Testis (tissue), 5 donors: ENCODE measurements at regions of chr14 and their contacts with region 1.

Region 1: GRCh38 chr14:22472935-22473854 is 115.8 kb downstream of the DAD1 start:
- DNase-seq: peak; percentile 58
- H3K4me3 ChIP-seq: no peak overlapping the region
- H3K27ac ChIP-seq: no peak overlapping the region
- H3K4me1 ChIP-seq: peaks cover 18% of the 10 kb centered on the region
- H3K27me3 ChIP-seq: no peaks in the 10 kb centered on the region
- CTCF ChIP-seq: peak in 2 of 3 experiments; percentile 37 to 38
- POLR2A ChIP-seq: no peak

Region 2: DNA sequence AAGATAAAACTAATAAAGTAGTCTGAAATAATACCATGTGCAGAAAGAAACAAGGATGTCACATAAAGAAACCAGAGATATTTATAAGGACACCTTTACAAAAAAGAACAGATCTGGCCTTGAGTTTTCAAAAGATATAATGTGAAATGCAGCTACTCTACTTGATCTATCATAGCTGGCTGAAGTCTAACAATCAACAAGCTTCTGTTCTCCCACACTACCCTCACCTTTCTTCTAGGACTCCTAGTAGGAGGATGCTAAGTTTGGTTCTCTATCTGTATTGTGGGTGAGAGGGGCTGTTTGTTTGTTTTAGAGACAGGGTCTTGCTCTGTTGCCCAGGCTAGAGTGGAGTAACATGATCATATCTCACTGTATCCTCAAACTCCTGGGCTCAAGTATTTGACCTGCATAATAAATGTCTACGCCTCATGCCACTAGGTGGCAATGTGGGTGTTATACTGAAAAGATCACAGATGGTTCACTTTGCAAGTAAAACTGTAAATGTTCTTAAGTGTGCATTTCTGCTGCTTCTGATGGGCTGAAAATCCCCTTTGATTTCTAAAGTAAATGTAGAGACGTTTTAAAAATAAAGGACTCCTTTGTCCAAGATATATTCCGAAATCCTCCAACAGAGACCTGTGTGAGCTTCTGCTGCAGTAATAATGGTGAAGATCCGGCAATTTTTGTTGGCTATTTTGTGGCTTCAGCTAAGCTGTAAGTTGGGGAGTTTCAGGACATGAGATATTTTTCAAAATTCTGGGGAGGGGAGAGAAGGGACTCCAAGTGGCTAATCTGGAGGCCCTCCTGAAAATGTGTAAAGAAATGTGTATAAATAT is 153.5 kb before region 1 on chr14:
- intact Hi-C with region 1: no loop called
- DNase-seq: peak; percentile 76
- H3K4me3 ChIP-seq: no peak overlapping the region
- H3K27ac ChIP-seq: no peak overlapping the region
- H3K4me1 ChIP-seq: no peaks in the 10 kb centered on the region
- H3K27me3 ChIP-seq: no peaks in the 10 kb centered on the region
- CTCF ChIP-seq: peak; percentile 46 to 75 (median 68)
- POLR2A ChIP-seq: no peak

Region 3: DNA sequence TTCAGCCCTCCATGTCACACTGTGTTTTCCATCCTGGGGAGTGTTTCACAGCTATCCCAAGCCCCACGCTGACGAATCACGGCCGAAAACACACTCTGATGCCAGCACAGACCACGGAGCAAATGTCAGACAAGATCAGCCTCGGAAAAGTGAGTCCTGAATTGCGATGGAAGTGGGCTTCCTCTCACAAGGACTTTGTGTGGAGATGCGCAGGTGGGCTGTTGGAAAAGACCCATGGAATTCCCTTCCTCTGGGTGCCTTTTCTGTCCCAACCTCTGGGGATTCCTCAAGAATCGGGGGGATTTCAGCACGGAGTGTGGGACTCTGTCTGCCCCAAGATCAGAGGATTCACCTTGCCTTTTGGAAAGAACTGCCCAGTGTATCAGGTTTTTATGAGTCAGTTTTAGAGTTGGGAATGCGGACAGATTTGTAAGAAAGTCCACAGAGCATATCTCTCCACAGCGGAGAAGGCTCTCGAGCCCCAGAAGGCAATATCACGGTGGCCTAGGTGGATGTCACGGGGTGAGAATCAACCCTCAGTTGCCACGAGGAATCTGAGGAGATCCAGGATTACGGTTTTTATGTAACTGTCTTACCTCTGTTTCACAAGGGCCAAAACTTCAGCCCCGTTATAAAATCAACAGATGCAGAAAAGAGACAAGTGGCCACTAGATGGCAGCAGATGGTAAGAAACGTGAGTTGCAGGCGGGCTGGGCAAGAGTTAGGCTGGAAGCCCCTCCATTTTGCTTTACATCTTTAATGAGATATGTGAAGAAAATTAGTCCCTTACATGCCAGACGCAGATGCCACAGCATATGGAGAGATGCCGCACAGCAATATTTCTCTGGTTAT is 86.0 kb before region 1 on chr14:
- intact Hi-C with region 1: loop called (anchors 5 kb)
- DNase-seq: peak; percentile 88
- H3K4me3 ChIP-seq: peak overlapping the region; percentile 0 to 21
- H3K27ac ChIP-seq: no peak overlapping the region
- H3K4me1 ChIP-seq: no peaks in the 10 kb centered on the region
- H3K27me3 ChIP-seq: no peaks in the 10 kb centered on the region
- CTCF ChIP-seq: peak; percentile 71 to 87 (median 79)
- POLR2A ChIP-seq: no peak